Left lung (tissue), 14 donors: ENCODE measurements at regions of chr19 and their contacts with region 1.

Region 1: GRCh38 chr19:43639519-43640423 is at the start of gene CADM4:
- DNase-seq: peak in 1 of 4 donors; percentile 81
- ATAC-seq: peak; percentile 90
- H3K4me3 ChIP-seq: peak within 1 kb of the TSS; percentile 27 to 40
- H3K27ac ChIP-seq: no peak within 1 kb of the TSS
- H3K4me1 ChIP-seq: peaks cover 7% of the 10 kb centered on the region in 2 donors
- H3K27me3 ChIP-seq: peaks cover 0 to 58% of the 10 kb centered on the region in 2 donors
- CTCF ChIP-seq: no peak
- polyA plus RNA-seq, gene CADM4: 17.2 to 24.0 (median 21.2) TPM

Region 2: DNA sequence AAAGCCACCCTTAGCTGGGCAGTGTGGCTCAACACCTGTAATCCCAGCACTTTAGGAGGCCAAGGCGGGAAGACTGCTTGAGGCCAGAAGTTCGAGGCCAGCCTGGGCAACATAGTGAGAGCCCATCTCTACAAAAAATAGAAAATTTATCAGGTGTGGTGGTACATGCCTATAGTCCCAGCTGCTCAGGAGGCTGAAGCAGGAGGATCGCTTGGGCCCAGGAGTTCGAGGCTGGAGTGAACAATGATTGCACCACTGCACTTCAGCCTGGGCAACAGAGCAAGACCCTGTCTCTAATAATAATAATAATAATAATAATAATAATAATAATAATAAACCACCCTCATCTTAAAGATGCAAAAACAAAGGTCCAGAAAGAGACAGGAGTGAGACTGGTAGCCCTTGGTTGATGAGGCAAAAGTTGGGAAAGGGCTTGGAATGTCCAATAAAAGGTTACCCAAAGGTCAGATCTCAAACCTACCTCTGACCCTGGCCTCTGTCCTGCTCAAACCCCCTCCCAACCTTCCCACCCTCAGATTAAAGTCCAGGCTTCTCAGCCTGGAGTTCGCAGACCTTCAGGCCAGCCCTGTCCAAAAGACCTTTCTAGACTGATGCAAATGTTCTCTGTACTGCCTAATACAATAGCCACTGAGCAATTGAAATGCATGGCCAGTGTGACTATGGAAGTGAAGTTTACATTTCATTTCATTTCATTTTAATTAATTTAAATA is 97.7 kb before region 1 on chr19:
- intact Hi-C with region 1: no loop called
- DNase-seq: no peak
- ATAC-seq: no peak
- H3K4me3 ChIP-seq: no peak overlapping the region
- H3K27ac ChIP-seq: no peak overlapping the region
- H3K4me1 ChIP-seq: no peaks in the 10 kb centered on the region
- H3K27me3 ChIP-seq: no peaks in the 10 kb centered on the region
- CTCF ChIP-seq: no peak

Region 3: GRCh38 chr19:43555185-43555770 is 84.5 kb before region 1 on chr19:
- intact Hi-C with region 1: loop called in 1 of 2 experiments (anchors 10 kb)
- DNase-seq: peak in 2 of 4 donors; percentile 65 to 72
- ATAC-seq: peak; percentile 93
- H3K4me3 ChIP-seq: no peak overlapping the region
- H3K27ac ChIP-seq: no peak overlapping the region
- H3K4me1 ChIP-seq: no peaks in the 10 kb centered on the region
- H3K27me3 ChIP-seq: no peaks in the 10 kb centered on the region
- CTCF ChIP-seq: peak; percentile 55 to 66

Region 4: DNA sequence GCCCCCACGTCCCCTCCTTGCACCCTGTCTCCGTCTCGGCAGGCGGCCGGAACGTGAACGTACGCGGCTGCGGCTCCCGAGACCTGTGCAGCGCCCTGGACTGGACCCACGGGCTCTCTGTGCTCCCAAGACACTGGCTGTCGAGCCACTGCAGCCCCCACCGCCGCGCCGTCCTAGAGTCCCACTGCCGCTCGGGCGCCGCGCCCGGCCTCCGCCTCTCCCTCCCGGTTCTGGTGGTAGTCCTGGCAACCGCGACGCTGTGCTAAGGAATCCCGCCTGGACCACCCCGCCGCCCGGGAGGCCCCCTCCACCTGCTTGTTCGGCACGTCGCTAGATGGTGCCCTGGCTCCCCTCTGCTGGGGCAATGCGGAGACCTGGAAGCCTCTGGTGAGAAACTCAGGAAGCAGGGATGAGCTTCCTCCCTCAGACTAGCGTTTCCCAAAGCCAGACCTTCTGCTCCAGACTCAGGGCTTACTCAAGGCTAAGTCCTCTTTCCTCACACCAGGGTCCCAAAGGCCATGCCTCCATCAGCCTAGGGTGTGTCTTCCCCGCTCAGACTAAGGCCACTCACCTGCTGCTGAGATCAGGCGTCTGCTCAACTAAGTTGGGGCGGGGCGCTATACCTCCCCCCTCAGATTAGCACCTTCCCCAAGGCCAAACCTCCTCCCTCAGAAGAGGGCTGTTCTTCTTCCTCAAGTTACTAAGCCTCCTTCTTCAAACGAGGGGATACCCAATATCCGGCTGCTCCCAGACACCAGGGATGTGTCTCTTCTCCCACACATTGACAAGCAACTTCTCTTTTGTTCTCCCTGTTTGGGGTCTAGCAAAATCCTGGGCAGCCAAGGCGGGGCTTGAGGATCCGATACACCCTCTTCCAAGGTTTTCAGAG is 60.0 kb after region 1 on chr19:
- intact Hi-C with region 1: no loop called
- DNase-seq: peak in 3 of 4 donors; percentile 47 to 83 (median 66)
- ATAC-seq: peak; percentile 26
- H3K4me3 ChIP-seq: peak overlapping the region; percentile 13 to 25
- H3K27ac ChIP-seq: peak overlapping the region; percentile 88 to 95
- H3K4me1 ChIP-seq: peaks cover 11 to 38% of the 10 kb centered on the region in 2 donors
- H3K27me3 ChIP-seq: peaks cover 0 to 18% of the 10 kb centered on the region in 2 donors
- CTCF ChIP-seq: no peak